ENCODE measurements at regions of chr16 and their contacts with region 1.

Region 1: GRCh38 chr16:81451753-81452680 is 7.4 kb downstream of the CMIP start:
- DNase-seq: peak in 2 of 4 experiments; percentile 72 to 84
- ATAC-seq: peak; percentile 77
- H3K4me3 ChIP-seq: peak overlapping the region; percentile 10; the same call in 1 of the 2 replicates
- H3K27ac ChIP-seq: peak overlapping the region; percentile 80
- H3K4me1 ChIP-seq: peaks cover 64 to 68% of the 10 kb centered on the region in 2 experiments
- H3K27me3 ChIP-seq: no peaks in the 10 kb centered on the region
- CTCF ChIP-seq: peak; percentile 13 to 33 (median 24); a peak in 3 of 6 replicates
- EP300 ChIP-seq: no peak; the same call in 1 of the 2 replicates
- POLR2A ChIP-seq: no peak
- RAD21 ChIP-seq: peak in 1 of 2 experiments; percentile 28; a peak in 2 of 4 replicates

Region 2: DNA sequence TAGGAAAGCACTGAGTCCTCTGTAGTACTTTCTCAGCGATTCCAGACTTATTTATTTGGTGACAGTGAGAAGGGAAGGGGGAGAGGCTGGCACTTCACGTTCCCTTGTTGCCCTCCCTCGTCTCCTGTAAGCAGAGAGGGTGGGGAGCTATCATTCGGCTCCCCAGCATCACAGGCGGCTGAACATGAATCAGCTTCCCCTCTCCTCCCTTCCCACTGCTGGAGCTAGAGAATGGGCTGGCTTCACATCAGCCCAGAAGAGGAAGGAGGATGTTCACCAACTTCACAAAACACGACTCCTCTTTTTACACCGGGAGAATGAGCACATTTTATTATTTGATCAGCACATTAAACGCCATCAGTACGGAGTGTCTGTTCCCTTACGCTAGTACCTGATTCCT is 14.2 kb before region 1 on chr16:
- CTCF ChIA-PET with region 1: no interaction called
- POLR2A ChIA-PET with region 1: interaction called, 12 read pairs
- in situ Hi-C with region 1: no loop called
- intact Hi-C with region 1: no loop called
- DNase-seq: no peak
- ATAC-seq: peak; percentile 24; the same call in 2 of the 3 replicates
- H3K4me3 ChIP-seq: no peak overlapping the region
- H3K27ac ChIP-seq: no peak overlapping the region
- H3K4me1 ChIP-seq: no peaks in the 10 kb centered on the region; a peak in 3 of 5 replicates
- H3K27me3 ChIP-seq: peaks cover 46 to 57% of the 10 kb centered on the region in 2 experiments
- CTCF ChIP-seq: no peak
- EP300 ChIP-seq: no peak
- POLR2A ChIP-seq: no peak
- RAD21 ChIP-seq: no peak

Region 3: GRCh38 chr16:81469710-81470535 is 17.9 kb after region 1 on chr16:
- CTCF ChIA-PET with region 1: no interaction called
- POLR2A ChIA-PET with region 1: interaction called, 14 read pairs
- in situ Hi-C with region 1: no loop called
- intact Hi-C with region 1: loop called (anchors 2 kb)
- DNase-seq: peak in 2 of 4 experiments; percentile 51 to 68
- ATAC-seq: peak; percentile 82
- H3K4me3 ChIP-seq: no peak overlapping the region
- H3K27ac ChIP-seq: peak overlapping the region; percentile 70
- H3K4me1 ChIP-seq: peaks cover 44 to 54% of the 10 kb centered on the region in 2 experiments
- H3K27me3 ChIP-seq: no peaks in the 10 kb centered on the region
- CTCF ChIP-seq: no peak
- EP300 ChIP-seq: peak; percentile 78
- POLR2A ChIP-seq: no peak
- RAD21 ChIP-seq: peak; percentile 42 to 43; a peak in 3 of 4 replicates

Region 4: DNA sequence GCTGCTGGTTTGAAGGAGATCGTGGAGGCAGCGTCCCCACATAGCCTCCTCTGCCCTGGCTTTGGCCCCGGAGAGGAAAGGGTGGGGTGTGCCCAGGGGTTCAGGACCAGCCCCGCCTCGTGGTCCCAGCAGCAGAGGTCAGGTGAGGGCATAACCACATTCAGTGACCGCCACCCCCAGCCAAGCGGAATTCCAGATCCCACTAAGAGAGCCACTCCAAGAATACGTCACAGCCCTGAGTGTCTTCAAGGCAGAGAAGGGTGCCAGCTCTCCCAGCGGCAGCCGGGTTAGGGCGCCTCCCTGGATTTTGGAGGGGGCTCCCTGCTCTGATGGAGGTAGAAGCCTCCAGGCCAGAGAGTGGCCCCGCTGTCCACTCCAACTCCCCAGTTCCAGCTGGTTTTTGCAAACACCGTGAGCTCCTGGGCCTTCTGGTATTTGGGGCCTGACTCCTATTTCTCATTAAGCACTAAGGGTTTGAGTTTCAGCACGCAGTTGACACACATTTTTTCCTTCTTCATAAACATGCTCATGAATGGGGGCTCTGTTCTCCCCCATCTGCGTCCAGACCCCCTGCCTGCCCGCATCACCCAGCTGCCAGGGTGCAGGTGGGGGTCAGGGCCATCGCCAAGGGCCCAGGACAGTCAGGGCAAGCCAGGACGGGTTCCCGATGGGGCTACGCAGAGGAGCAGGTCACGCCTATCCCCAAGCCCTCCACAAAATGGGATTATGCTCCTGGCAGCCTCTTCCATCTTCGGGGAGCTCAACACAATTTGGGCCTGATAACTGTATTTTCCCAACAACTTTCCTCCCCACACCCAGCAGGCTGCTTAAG is 228.6 kb after region 1 on chr16:
- CTCF ChIA-PET with region 1: no interaction called
- POLR2A ChIA-PET with region 1: no interaction called
- in situ Hi-C with region 1: no loop called
- intact Hi-C with region 1: no loop called
- DNase-seq: no peak
- ATAC-seq: no peak
- H3K4me3 ChIP-seq: no peak overlapping the region
- H3K27ac ChIP-seq: no peak overlapping the region
- H3K4me1 ChIP-seq: peaks cover 0 to 17% of the 10 kb centered on the region in 2 experiments; a peak in 1 of 5 replicates
- H3K27me3 ChIP-seq: no peaks in the 10 kb centered on the region
- CTCF ChIP-seq: no peak
- EP300 ChIP-seq: no peak
- POLR2A ChIP-seq: no peak
- RAD21 ChIP-seq: no peak